Heart left ventricle (tissue), 16 donors: ENCODE measurements at regions of chr13 and their contacts with region 1.

Region 1: DNA sequence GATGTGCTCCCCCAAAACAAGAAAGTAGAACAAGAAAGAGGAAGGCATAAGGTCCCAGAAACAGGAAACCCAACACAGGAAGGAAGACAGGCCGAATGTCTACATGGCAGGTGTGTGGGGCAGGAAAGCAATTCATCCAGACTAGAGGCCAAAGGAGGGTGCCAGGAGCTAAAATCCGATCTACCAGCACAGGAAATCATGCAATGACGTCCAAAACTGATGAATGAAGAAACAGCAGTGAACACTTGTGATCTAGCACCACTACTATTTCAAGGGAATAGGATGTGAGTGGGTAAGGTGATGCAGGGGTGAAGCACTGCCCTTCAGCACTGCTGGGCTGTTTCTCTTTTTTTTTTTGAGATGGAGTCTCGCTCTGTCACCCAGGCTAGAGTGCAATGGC is 59.1 kb downstream of the DOCK9 start:
- DNase-seq: no peak
- ATAC-seq: peak in 1 of 4 donors; percentile 59
- H3K4me3 ChIP-seq: no peak overlapping the region
- H3K27ac ChIP-seq: peak overlapping the region in 3 of 12 donors; percentile 12 to 34 (median 29)
- H3K4me1 ChIP-seq: peaks cover 0 to 73% (median 38%) of the 10 kb centered on the region in 12 donors
- H3K27me3 ChIP-seq: no peaks in the 10 kb centered on the region
- CTCF ChIP-seq: no peak
- POLR2A ChIP-seq: no peak

Region 2: GRCh38 chr13:98900442-98900841 is 18.3 kb before region 1 on chr13:
- intact Hi-C with region 1: loop called in 1 of 10 experiments (anchors 2 kb)
- DNase-seq: no peak
- ATAC-seq: no peak
- H3K4me3 ChIP-seq: no peak overlapping the region
- H3K27ac ChIP-seq: no peak overlapping the region
- H3K4me1 ChIP-seq: peaks cover 0 to 8% (median 0%) of the 10 kb centered on the region in 12 donors
- H3K27me3 ChIP-seq: no peaks in the 10 kb centered on the region
- CTCF ChIP-seq: no peak
- POLR2A ChIP-seq: no peak

Region 3: DNA sequence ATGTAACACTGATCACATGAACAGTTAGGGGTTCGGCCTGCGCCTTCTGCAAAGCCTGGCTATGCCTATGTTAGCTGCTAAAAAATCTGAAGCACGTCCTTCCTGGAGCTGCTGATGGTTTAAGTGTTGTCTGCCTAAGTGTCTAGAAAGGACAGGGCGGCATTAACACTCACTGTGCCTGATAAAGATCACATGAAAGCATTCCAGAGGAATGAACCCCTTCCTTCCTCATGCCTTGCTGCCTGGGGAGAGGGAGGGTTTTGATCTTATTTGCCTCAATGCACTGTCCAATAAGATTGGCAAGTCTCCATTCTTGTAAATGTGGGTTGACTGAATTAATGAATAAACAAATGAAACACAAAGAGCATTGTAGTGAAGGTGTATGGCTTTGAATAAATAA is 53.9 kb after region 1 on chr13:
- intact Hi-C with region 1: loop called in 6 of 10 experiments (anchors 5 to 10 kb)
- DNase-seq: no peak
- ATAC-seq: no peak
- H3K4me3 ChIP-seq: peak overlapping the region in 3 of 12 donors; percentile 3 to 14 (median 6)
- H3K27ac ChIP-seq: peak overlapping the region in 11 of 12 donors; percentile 48 to 84 (median 74)
- H3K4me1 ChIP-seq: peaks cover 0 to 83% (median 51%) of the 10 kb centered on the region in 12 donors
- H3K27me3 ChIP-seq: peaks cover 0 to 7% (median 0%) of the 10 kb centered on the region in 9 donors
- CTCF ChIP-seq: no peak
- POLR2A ChIP-seq: no peak